ENCODE measurements at regions of chr5 and their contacts with region 1.

Region 1: GRCh38 chr5:132410451-132411381 is 41.2 kb downstream of the SLC22A5 start:
- DNase-seq: peak; percentile 92
- ATAC-seq: peak; percentile 79

Region 2: GRCh38 chr5:132386644-132387286 is 24.0 kb before region 1 on chr5:
- intact Hi-C with region 1: loop called (anchors 2 kb)
- DNase-seq: peak; percentile 88
- ATAC-seq: peak; percentile 84

Region 3: GRCh38 chr5:132446669-132447068 is 36.0 kb after region 1 on chr5:
- intact Hi-C with region 1: no loop called
- DNase-seq: peak; percentile 82
- ATAC-seq: peak; percentile 90

Region 4: GRCh38 chr5:132495667-132496190 is 85.0 kb after region 1 on chr5:
- intact Hi-C with region 1: loop called (anchors 1 kb)
- DNase-seq: peak; percentile 94
- ATAC-seq: peak; percentile 73

Measured in Right ventricle myocardium inferior (tissue), 1 donor.